ENCODE measurements at regions of chr22 and their contacts with region 1.

Region 1: GRCh38 chr22:19447388-19448075 is at the start of gene C22orf39:
- DNase-seq: peak; percentile 90 to 97 (median 95)
- H3K4me3 ChIP-seq: peak within 1 kb of the TSS; percentile 63 to 99 (median 93)
- H3K27ac ChIP-seq: peak within 1 kb of the TSS; percentile 21 to 97 (median 87)
- H3K27me3 ChIP-seq: no peaks in the 10 kb centered on the region
- CTCF ChIP-seq: peak in 12 of 56 donors; percentile 6 to 39 (median 20)
- total RNA-seq, gene C22orf39: 37.4 to 76.4 (median 59.4) TPM

Region 2: DNA sequence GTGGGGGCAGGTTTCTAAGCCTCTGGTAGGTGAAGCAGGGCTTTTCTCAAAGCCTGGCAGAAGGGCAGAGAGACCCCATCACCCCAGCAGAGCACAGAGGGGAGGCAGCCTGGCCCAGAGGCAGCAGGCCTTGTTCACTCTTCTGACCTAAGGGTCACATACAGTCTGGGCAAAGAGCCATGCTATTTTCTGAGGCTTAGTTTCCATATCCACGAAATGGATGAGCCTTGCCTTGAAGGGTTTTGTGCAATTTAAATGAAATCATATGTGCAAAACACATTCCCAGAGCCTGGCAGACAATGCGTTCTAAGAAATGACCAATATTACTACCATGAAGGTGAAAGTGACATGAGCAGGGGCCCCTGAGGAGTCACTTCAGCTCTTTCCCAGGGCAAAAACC is 60.5 kb before region 1 on chr22:
- intact Hi-C with region 1: loop called in 1 of 2 experiments (anchors 10 kb)
- DNase-seq: no peak
- H3K4me3 ChIP-seq: no peak overlapping the region
- H3K27ac ChIP-seq: no peak overlapping the region
- H3K27me3 ChIP-seq: no peaks in the 10 kb centered on the region
- CTCF ChIP-seq: no peak

Region 3: DNA sequence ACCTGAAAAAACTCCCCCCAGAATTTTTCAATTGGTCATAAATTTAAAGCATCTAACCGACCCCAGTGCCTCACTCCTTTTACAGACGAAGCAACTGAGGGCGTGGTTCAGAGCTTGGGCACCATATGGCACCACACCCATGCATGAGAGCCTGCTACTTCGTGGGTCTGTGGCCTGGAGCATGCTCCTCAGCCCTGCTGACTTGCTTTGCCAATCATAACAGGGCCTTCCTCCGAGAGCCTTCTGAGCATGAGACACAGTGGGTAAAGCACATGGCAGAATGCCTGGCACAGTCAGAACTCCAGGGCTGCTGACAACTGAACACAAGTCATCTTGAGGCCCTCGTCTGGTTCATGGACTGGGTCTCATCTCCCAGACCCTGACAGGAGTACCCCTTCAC is 49.3 kb before region 1 on chr22:
- intact Hi-C with region 1: no loop called
- DNase-seq: no peak
- H3K4me3 ChIP-seq: no peak overlapping the region
- H3K27ac ChIP-seq: peak overlapping the region in 12 of 59 donors; percentile 1 to 59 (median 40)
- H3K27me3 ChIP-seq: no peaks in the 10 kb centered on the region
- CTCF ChIP-seq: no peak

Region 4: DNA sequence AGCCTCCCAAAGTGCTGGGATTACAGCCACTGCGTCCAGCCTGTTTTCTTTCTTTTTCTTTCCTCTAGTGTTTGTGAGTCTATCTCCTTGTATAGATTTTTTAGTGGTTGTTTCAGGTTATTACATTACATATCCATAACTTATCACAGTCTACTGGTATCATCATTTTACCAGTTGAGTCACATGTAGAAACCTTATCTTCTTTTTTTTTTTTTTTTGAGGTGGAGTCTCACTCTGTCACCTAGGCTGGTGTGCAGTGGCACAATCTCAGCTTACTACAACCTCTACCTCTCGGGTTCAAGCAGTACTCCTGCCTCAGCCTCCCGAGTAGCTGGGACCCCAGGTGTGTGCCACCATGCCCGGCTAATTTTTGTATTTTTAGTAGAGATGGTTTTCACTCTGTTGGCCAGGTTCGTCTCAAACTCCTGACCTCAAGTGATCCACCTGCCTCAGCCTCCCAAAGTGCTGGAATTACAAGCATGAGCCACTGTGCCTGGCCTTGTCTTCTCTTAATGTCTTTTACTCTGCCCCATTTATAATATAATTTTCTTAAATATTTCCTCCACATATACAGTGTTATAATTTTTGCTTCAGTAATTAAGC is 43.2 kb after region 1 on chr22:
- intact Hi-C with region 1: no loop called
- DNase-seq: no peak
- H3K4me3 ChIP-seq: no peak overlapping the region
- H3K27ac ChIP-seq: no peak overlapping the region
- H3K27me3 ChIP-seq: peaks cover 0 to 3% (median 0%) of the 10 kb centered on the region in 45 donors
- CTCF ChIP-seq: no peak

Measured in dorsolateral prefrontal cortex (tissue), 120 donors.